ENCODE measurements at regions of chr4 and their contacts with region 1.

Region 1: GRCh38 chr4:159206427-159206871 is 103.6 kb downstream of the RAPGEF2 start:
- DNase-seq: peak in 1 of 5 donors; percentile 11
- H3K4me3 ChIP-seq: no peak overlapping the region
- H3K4me3 Mint-ChIP-seq: peak overlapping the region in 4 of 8 donors; percentile 10 to 27 (median 16)
- H3K27ac ChIP-seq: no peak overlapping the region
- H3K27ac Mint-ChIP-seq: peak overlapping the region in 3 of 7 donors; percentile 21 to 55 (median 39)
- H3K4me1 ChIP-seq: peaks cover 17% of the 10 kb centered on the region
- H3K4me1 Mint-ChIP-seq: peaks cover 17 to 33% (median 21%) of the 10 kb centered on the region in 4 donors
- H3K27me3 ChIP-seq: no peaks in the 10 kb centered on the region
- H3K27me3 Mint-ChIP-seq: no peaks in the 10 kb centered on the region

Region 2: GRCh38 chr4:157992038-157992705 is 1214.3 kb before region 1 on chr4:
- CTCF ChIA-PET with region 1: no interaction called
- POLR2A ChIA-PET with region 1: no interaction called
- intact Hi-C with region 1: loop called (anchors 2 kb)
- DNase-seq: peak in 4 of 5 donors; percentile 18 to 37 (median 28)
- H3K4me3 ChIP-seq: no peak overlapping the region
- H3K4me3 Mint-ChIP-seq: peak overlapping the region in 5 of 8 donors; percentile 18 to 68 (median 45)
- H3K27ac ChIP-seq: no peak overlapping the region
- H3K27ac Mint-ChIP-seq: peak overlapping the region in 1 of 7 donors; percentile 41
- H3K4me1 ChIP-seq: no peaks in the 10 kb centered on the region
- H3K4me1 Mint-ChIP-seq: peaks cover 0 to 4% (median 0%) of the 10 kb centered on the region in 4 donors
- H3K27me3 ChIP-seq: no peaks in the 10 kb centered on the region
- H3K27me3 Mint-ChIP-seq: no peaks in the 10 kb centered on the region

Region 3: DNA sequence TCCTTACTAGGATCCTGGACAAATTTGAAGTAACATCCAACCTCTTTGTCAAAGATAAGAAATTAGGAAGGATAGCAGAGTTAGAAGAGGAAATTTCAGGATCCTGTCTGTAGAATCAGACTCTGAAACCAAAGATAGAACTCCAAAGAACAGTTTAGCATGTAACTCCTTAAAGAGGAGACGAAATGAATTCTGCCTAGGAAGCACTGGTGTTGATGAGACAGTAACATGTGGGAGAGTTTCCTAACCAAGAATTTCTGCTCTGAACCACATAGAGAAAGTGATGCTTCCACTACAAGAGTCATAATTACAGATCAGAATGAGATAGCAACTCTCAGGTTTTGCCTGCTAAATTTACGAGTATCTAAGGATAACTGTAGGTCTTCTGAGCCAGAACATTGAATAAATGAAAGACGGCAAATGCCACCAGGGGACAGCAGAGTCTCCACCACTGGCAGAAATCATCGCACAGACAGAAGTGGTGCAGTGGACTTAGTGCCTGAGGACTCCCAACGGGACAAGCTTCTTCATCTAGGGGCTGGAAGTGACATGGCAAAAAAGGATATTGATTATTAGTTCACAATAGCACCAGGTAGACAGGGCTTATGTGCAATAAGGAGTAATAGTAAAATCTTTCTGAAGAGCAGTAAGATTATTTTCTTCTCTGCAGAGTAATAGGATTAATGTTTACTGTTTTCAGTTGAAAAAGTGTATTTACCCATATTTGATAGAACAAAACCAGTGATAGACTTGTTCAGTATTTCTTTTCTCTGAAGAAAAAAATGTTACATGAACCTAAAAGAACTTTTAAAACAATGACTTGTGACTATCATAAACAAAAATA is 476.5 kb before region 1 on chr4:
- CTCF ChIA-PET with region 1: interaction called, 5 read pairs
- POLR2A ChIA-PET with region 1: no interaction called
- intact Hi-C with region 1: loop called (anchors 1 kb)
- DNase-seq: peak in 4 of 5 donors; percentile 51 to 55 (median 54)
- H3K4me3 ChIP-seq: no peak overlapping the region
- H3K4me3 Mint-ChIP-seq: no peak overlapping the region
- H3K27ac ChIP-seq: no peak overlapping the region
- H3K27ac Mint-ChIP-seq: no peak overlapping the region
- H3K4me1 ChIP-seq: no peaks in the 10 kb centered on the region
- H3K4me1 Mint-ChIP-seq: peaks cover 0 to 1% (median 0%) of the 10 kb centered on the region in 4 donors
- H3K27me3 ChIP-seq: peaks cover 5% of the 10 kb centered on the region
- H3K27me3 Mint-ChIP-seq: peaks cover 21 to 22% of the 10 kb centered on the region in 2 donors

Region 4: DNA sequence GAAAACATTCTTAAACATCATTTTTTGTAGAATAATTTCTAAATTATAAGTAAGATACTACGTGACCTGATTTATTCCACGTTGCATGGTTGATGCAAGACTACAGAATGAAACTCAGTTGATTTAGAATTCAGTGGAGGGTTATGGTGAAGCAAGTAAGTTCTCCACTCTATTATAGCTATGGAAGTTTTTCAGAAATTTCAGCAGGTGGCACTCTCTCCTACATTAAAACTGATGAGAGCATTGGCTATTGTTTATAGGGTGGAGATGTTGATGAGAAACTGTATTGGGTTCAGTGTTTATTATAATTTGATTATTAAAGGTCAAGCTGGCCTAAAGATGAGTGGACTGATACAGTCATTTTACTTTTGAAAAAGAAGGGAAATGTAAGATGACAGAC is 349.6 kb before region 1 on chr4:
- CTCF ChIA-PET with region 1: interaction called, 34 read pairs
- POLR2A ChIA-PET with region 1: no interaction called
- intact Hi-C with region 1: loop called (anchors 1 kb)
- DNase-seq: peak in 4 of 5 donors; percentile 22 to 28 (median 27)
- H3K4me3 ChIP-seq: no peak overlapping the region
- H3K4me3 Mint-ChIP-seq: no peak overlapping the region
- H3K27ac ChIP-seq: no peak overlapping the region
- H3K27ac Mint-ChIP-seq: no peak overlapping the region
- H3K4me1 ChIP-seq: no peaks in the 10 kb centered on the region
- H3K4me1 Mint-ChIP-seq: no peaks in the 10 kb centered on the region
- H3K27me3 ChIP-seq: no peaks in the 10 kb centered on the region
- H3K27me3 Mint-ChIP-seq: no peaks in the 10 kb centered on the region